Activated B cell treated with CpG ODN at 0.5 μM for 24 hours (primary cell): ENCODE measurements at regions of chr18 and their contacts with region 1.

Region 1: GRCh38 chr18:59846814-59847490 is 52.8 kb upstream of the PMAIP1 start:
- DNase-seq: no peak
- ATAC-seq: peak; percentile 89
- H3K4me3 Mint-ChIP-seq: peak overlapping the region; percentile 35
- H3K27ac Mint-ChIP-seq: peak overlapping the region; percentile 82
- H3K4me1 Mint-ChIP-seq: peaks cover 34% of the 10 kb centered on the region
- H3K27me3 Mint-ChIP-seq: no peaks in the 10 kb centered on the region
- CTCF ChIP-seq: no peak

Region 2: GRCh38 chr18:59787998-59788790 is 58.8 kb before region 1 on chr18:
- CTCF ChIA-PET with region 1: no interaction called
- POLR2A ChIA-PET with region 1: no interaction called
- intact Hi-C with region 1: no loop called
- DNase-seq: no peak
- ATAC-seq: no peak
- H3K4me3 Mint-ChIP-seq: no peak overlapping the region
- H3K27ac Mint-ChIP-seq: no peak overlapping the region
- H3K4me1 Mint-ChIP-seq: no peaks in the 10 kb centered on the region
- H3K27me3 Mint-ChIP-seq: peaks cover 4% of the 10 kb centered on the region
- CTCF ChIP-seq: no peak

Region 3: GRCh38 chr18:59861963-59862819 is 15.2 kb after region 1 on chr18:
- CTCF ChIA-PET with region 1: no interaction called
- POLR2A ChIA-PET with region 1: interaction called, 3 read pairs
- intact Hi-C with region 1: loop called (anchors 2 kb)
- DNase-seq: no peak
- ATAC-seq: peak; percentile 82
- H3K4me3 Mint-ChIP-seq: no peak overlapping the region
- H3K27ac Mint-ChIP-seq: no peak overlapping the region
- H3K4me1 Mint-ChIP-seq: peaks cover 23% of the 10 kb centered on the region
- H3K27me3 Mint-ChIP-seq: no peaks in the 10 kb centered on the region
- CTCF ChIP-seq: no peak

Region 4: DNA sequence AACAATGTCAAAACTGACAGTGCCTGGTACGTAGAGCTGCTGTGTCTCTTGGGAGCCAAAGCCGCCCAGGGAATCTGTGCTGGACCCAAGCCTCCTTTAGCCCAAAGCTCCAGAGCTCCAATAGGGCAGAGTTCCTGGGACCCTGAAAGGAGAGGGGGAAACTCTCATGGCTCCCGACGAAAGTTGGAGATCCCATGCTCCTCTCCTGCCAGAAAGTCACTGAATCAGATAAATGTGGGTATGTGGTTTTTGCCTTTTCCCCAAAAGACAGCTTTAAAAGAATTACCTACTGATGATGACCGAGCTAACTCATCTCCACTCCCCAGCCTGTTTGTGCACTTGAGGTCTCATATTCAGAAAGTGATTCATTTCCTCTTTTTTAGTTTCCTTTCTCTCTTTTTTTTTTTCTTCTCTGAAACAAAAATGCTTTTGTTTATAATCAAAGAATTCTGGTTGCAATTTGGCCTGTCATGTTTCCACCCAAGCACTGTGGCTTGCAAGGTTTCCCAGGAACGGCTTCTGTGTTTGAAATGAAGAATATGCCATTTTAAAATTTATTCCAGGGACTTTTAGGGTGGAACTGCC is 38.7 kb after region 1 on chr18:
- CTCF ChIA-PET with region 1: no interaction called
- POLR2A ChIA-PET with region 1: interaction called, 4 read pairs
- intact Hi-C with region 1: loop called (anchors 2 kb)
- DNase-seq: peak; percentile 38
- ATAC-seq: peak; percentile 79
- H3K4me3 Mint-ChIP-seq: peak overlapping the region; percentile 70
- H3K27ac Mint-ChIP-seq: peak overlapping the region; percentile 82
- H3K4me1 Mint-ChIP-seq: peaks cover 53% of the 10 kb centered on the region
- H3K27me3 Mint-ChIP-seq: no peaks in the 10 kb centered on the region
- CTCF ChIP-seq: no peak

Region 5: GRCh38 chr18:59957971-59958595 is 111.1 kb after region 1 on chr18:
- CTCF ChIA-PET with region 1: no interaction called
- POLR2A ChIA-PET with region 1: interaction called, 3 read pairs
- intact Hi-C with region 1: loop called (anchors 1 kb)
- DNase-seq: no peak
- ATAC-seq: no peak
- H3K4me3 Mint-ChIP-seq: no peak overlapping the region
- H3K27ac Mint-ChIP-seq: peak overlapping the region; percentile 43
- H3K4me1 Mint-ChIP-seq: peaks cover 63% of the 10 kb centered on the region
- H3K27me3 Mint-ChIP-seq: no peaks in the 10 kb centered on the region
- CTCF ChIP-seq: no peak